Heart right ventricle (tissue), 16 donors: ENCODE measurements at regions of chr11 and their contacts with region 1.

Region 1: DNA sequence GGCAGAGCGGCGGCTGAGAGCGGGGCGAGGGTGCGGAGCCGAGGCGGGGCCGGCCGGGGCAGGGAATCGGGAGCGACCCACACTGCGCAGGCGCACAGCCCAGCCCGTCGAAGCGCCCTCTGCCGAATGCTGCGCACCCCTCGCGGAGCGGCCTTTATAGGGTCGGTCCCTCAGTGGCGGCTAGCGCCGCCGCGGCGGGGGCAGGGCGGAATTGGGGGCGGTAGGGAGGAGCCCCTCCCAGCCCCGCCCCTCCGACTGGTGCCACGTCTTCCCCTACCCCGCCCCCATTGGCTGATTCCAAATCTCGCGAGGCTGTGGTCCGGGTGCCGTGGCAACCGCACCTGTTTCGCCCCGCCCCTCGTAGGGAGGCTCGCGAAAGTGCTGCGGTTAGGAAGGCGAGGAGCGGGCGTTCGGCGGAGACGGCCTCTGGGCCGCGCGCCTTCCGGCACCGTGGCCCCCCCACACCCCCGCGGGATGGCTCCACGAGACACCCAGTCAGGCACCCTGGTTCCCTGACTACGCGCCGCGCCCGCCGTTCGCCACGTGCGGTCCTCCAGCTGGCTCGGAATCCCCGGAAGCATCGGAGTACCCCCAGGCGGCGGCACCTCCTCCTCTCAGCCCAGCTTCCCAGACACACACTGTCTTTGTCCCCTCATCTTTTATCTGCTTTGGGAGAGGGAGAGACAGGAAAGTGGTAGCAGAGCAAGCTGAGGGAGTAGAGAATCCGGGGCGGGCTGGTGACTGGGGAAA is at the start of gene EHD1:
- DNase-seq: peak; percentile 99
- ATAC-seq: peak; percentile 92 to 96 (median 94)
- H3K4me3 ChIP-seq: peak within 1 kb of the TSS; percentile 68 to 99 (median 94)
- H3K27ac ChIP-seq: peak within 1 kb of the TSS; percentile 77 to 96 (median 94)
- H3K4me1 ChIP-seq: peaks cover 16 to 70% (median 54%) of the 10 kb centered on the region in 9 donors
- H3K27me3 ChIP-seq: no peaks in the 10 kb centered on the region
- CTCF ChIP-seq: peak in 8 of 9 donors; percentile 49 to 84 (median 64)
- total RNA-seq, gene EHD1: 30.7 to 73.1 (median 43.9) TPM

Region 2: GRCh38 chr11:64854534-64855429 is 23.9 kb before region 1 on chr11:
- intact Hi-C with region 1: loop called in 2 of 10 experiments (anchors 2 kb)
- DNase-seq: peak; percentile 80 to 83
- ATAC-seq: peak; percentile 62 to 87 (median 80)
- H3K4me3 ChIP-seq: peak overlapping the region in 7 of 10 donors; percentile 6 to 41 (median 20)
- H3K27ac ChIP-seq: peak overlapping the region; percentile 31 to 96 (median 87)
- H3K4me1 ChIP-seq: peaks cover 48 to 100% (median 100%) of the 10 kb centered on the region in 9 donors
- H3K27me3 ChIP-seq: no peaks in the 10 kb centered on the region
- CTCF ChIP-seq: peak in 2 of 9 donors; percentile 10